ENCODE measurements at regions of chr14 and their contacts with region 1.

Region 1: DNA sequence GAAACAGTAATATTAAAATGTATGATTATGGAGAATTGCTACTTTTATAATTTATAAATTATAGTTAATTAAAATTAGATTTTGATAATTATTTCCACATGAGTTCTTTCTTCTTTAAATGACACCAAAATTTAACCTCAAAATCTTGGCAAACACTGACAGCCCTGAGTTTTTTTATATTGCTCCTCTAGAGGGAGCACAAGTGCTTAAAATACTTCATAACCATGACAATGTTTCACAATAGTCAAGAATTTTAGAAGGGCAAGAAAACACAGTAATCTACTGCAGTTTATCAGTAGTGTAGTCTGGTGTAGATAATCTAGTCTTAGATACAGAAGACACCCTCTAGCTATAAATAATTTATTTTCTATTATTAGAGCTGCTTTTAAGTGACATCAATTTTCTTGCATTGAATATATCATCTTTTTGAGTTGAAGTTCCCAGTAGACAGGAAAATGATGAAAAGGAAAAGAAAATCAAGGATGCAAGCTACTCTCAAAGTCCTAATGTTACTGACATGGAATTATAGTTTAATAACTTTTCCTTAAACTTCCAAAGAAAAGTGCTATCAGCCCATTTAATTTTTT is 14.3 kb upstream of the PTGER2 start:
- DNase-seq: no peak
- H3K4me3 ChIP-seq: no peak overlapping the region
- H3K27ac ChIP-seq: no peak overlapping the region
- H3K4me1 ChIP-seq: no peaks in the 10 kb centered on the region
- H3K27me3 ChIP-seq: no peaks in the 10 kb centered on the region
- CTCF ChIP-seq: peak; percentile 68 to 71 (median 71)
- POLR2A ChIP-seq: no peak

Region 2: GRCh38 chr14:52348776-52349175 is 49.0 kb after region 1 on chr14:
- intact Hi-C with region 1: loop called (anchors 2 kb)
- DNase-seq: no peak
- H3K4me3 ChIP-seq: no peak overlapping the region
- H3K27ac ChIP-seq: no peak overlapping the region
- H3K4me1 ChIP-seq: no peaks in the 10 kb centered on the region
- H3K27me3 ChIP-seq: no peaks in the 10 kb centered on the region
- CTCF ChIP-seq: no peak
- POLR2A ChIP-seq: no peak

Region 3: GRCh38 chr14:52473557-52473956 is 173.8 kb after region 1 on chr14:
- intact Hi-C with region 1: loop called (anchors 10 kb)
- DNase-seq: no peak
- H3K4me3 ChIP-seq: no peak overlapping the region
- H3K27ac ChIP-seq: no peak overlapping the region
- H3K4me1 ChIP-seq: no peaks in the 10 kb centered on the region
- H3K27me3 ChIP-seq: no peaks in the 10 kb centered on the region
- CTCF ChIP-seq: peak in 2 of 3 donors; percentile 42 to 51
- POLR2A ChIP-seq: no peak

Measured in breast epithelium (tissue), 4 donors.